ENCODE measurements at regions of chr15 and their contacts with region 1.

Region 1: DNA sequence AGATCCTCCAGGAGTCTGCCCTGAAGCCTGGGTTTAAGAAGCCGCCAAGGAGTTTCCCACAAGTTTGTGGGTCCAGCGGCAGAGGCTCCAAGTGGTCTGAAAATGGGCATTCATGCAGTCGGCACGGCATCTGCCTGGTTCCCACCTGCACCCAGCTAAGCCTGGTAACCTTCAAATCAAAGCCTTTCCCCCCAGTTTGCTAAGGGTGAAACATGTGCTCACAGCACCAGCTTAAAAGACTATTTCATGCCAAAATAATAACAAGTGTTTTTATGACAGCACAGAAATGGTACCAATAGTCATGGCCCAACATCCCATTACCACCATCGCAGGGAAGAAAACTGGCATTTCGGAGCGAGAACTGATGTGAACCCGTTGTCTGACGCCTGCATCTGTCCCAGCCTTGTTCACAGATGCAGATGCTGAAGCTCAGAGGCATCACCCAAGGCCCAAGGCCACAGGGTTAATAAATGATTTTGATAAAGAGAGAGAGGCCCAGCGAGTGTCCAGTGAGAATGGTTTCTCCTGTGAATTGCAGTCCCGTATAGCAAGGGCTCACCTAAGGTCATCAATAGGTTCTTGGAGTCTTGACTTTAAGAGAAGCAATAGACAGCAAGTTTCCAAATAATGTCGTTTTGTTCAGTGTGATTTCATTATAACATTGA is 188.0 kb upstream of the TPM1 start:
- DNase-seq: no peak
- ATAC-seq: no peak
- H3K4me3 ChIP-seq: no peak overlapping the region
- H3K27ac ChIP-seq: peak overlapping the region; percentile 13; the same call in 1 of the 2 replicates
- H3K4me1 ChIP-seq: peaks cover 11% of the 10 kb centered on the region
- H3K27me3 ChIP-seq: no peaks in the 10 kb centered on the region
- CTCF ChIP-seq: no peak

Region 2: DNA sequence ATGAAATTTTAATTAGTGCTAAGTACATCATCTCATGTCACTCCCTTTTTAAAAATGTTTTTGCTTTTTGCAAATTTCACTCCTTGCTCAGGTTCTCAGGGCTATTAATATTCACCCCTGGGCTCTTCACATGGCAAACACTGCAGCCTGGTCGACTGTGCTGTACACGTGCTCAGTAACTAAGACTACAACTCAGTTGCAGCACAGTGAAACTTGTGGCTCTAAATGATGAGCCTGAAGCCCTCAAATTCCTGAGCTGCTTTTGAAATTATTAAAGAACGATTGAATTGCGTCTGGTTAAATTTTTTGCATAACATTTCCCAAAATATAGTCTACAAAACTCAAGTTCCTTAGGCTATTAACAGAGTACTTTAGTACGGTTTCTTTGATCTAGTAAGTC is 530.2 kb before region 1 on chr15:
- CTCF ChIA-PET with region 1: no interaction called
- POLR2A ChIA-PET with region 1: no interaction called
- in situ Hi-C with region 1: no loop called
- intact Hi-C with region 1: no loop called
- DNase-seq: no peak
- ATAC-seq: no peak
- H3K4me3 ChIP-seq: no peak overlapping the region
- H3K27ac ChIP-seq: no peak overlapping the region
- H3K4me1 ChIP-seq: no peaks in the 10 kb centered on the region
- H3K27me3 ChIP-seq: no peaks in the 10 kb centered on the region
- CTCF ChIP-seq: no peak

Region 3: DNA sequence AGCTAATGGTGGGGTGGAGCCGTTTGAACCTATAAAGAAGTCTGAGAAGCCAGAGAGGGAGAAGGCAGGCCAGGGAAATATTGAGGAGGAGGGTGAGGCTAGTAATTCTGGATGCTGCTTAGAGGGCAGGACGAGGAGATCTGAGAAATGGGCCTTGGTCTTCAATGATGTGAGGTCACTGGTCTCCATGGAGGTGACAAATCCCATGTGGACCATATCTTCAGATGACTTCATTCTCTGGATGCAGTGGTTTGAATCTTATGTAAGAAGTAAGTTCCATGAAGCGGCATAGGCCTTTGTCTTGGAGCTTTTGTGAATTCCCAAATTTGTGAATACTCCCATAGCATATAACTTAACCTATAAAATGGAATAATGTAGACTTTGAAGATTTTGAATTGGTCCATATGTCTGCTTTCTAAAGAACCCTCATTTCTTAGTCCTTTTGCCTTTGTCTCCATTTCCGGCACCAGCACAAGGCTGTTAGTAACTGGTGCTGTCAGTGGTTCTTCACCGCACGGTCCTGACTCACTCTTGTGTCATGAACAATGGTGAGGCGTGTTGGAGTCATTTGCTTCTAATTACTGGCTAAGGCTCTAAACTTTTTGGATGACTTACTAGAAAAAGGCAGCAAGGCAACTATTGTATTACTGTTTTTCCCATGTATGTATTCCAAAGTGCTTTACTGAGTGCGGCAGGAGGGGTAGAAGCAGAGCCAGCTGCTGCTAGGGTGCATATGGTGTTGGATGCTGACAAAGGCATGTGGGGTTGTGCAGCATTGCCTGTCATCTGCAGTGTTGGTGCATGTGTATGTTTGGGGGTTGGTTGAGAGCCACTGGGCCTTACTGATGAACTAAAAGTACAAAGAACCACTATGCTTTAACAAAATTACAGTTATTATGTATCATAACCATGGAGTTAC is 410.2 kb before region 1 on chr15:
- CTCF ChIA-PET with region 1: no interaction called
- POLR2A ChIA-PET with region 1: no interaction called
- in situ Hi-C with region 1: no loop called
- intact Hi-C with region 1: no loop called
- DNase-seq: peak; percentile 82
- ATAC-seq: peak; percentile 82
- H3K4me3 ChIP-seq: no peak overlapping the region
- H3K27ac ChIP-seq: no peak overlapping the region
- H3K4me1 ChIP-seq: no peaks in the 10 kb centered on the region
- H3K27me3 ChIP-seq: no peaks in the 10 kb centered on the region
- CTCF ChIP-seq: no peak

Region 4: GRCh38 chr15:62886431-62887071 is 32.0 kb after region 1 on chr15:
- CTCF ChIA-PET with region 1: interaction called, 4 read pairs
- POLR2A ChIA-PET with region 1: no interaction called
- in situ Hi-C with region 1: no loop called
- intact Hi-C with region 1: loop called (anchors 1 kb)
- DNase-seq: no peak
- ATAC-seq: peak; percentile 47
- H3K4me3 ChIP-seq: peak overlapping the region; percentile 0 to 36; a peak in 2 of 4 replicates
- H3K27ac ChIP-seq: peak overlapping the region; percentile 78
- H3K4me1 ChIP-seq: peaks cover 20% of the 10 kb centered on the region
- H3K27me3 ChIP-seq: no peaks in the 10 kb centered on the region
- CTCF ChIP-seq: no peak